ENCODE measurements at regions of chr11 and their contacts with region 1.

Region 1: DNA sequence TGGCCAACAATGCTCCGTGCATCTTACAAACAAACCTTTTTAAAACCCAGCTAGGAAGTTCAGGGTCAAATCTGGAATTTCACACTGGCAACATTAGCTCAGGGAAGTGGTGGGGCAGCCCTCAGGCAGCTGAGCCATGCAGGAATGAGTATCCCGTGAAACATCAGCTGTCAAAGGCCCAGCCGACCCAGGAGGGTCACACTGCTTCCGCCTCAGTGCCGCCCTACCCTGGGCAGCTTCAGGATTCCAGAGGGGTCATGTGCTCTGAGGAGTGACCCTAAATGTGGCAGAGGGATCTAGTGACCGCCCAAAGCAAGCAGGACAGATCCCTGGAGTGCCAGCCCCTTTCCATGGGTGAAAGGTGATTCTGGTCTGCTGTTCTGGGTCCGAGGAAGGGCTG is 73.4 kb downstream of the LINC01488 start:
- DNase-seq: no peak
- ATAC-seq: no peak
- H3K4me3 ChIP-seq: no peak overlapping the region
- H3K27ac ChIP-seq: no peak overlapping the region
- H3K4me1 ChIP-seq: peaks cover 2% of the 10 kb centered on the region; the same call in 1 of the 2 replicates
- H3K27me3 ChIP-seq: no peaks in the 10 kb centered on the region
- CTCF ChIP-seq: no peak
- POLR2A ChIP-seq: no peak
- RAD21 ChIP-seq: no peak

Region 2: DNA sequence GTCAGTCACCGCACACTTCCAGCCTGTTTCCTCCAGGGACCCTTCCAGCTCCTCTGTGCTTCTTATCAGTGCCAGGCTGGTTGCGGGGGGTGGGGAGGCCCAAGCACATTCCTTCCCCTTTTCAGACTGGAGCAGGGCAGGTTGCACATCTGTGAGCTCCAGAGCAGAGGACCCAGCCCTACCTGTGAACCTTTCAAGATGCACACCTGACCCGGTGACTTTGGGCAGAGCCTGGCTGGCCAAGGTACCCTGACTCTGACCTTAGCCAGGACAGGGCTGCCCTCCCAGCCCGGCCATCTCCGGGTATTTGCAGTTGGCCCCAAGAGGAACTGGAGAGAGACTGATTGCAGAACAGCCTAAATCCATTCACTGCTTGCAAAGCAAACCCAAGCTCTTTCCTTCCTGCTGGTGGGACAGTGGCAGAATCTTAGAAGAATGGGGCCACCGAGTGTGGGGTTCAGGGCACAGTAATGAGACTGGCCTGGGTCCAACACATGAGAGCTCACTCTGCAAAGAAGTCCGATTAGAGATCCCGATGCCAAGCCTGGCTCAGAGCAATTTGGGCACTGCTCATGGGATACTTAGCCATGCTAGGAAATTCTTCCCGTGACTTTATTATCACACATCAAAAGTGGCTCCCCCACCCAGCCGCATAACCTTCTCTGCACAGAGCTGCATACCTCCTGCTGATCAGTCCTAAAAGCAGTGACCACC is 21.3 kb after region 1 on chr11:
- CTCF ChIA-PET with region 1: no interaction called
- POLR2A ChIA-PET with region 1: interaction called, 10 read pairs
- dilution Hi-C with region 1: no loop called
- in situ Hi-C with region 1: no loop called
- intact Hi-C with region 1: no loop called
- DNase-seq: no peak
- ATAC-seq: no peak
- H3K4me3 ChIP-seq: no peak overlapping the region
- H3K27ac ChIP-seq: no peak overlapping the region
- H3K4me1 ChIP-seq: no peaks in the 10 kb centered on the region
- H3K27me3 ChIP-seq: peaks cover 22% of the 10 kb centered on the region
- CTCF ChIP-seq: no peak
- POLR2A ChIP-seq: no peak
- RAD21 ChIP-seq: no peak